Activated CD4-positive, alpha-beta memory T cell treated with anti-CD3 and anti-CD28 coated beads for 36 hours (primary cell): ENCODE measurements at regions of chr5 and their contacts with region 1.

Region 1: GRCh38 chr5:56080375-56081052 is 85.8 kb upstream of the IL6ST start:
- DNase-seq: peak; percentile 50
- H3K4me3 Mint-ChIP-seq: peak overlapping the region; percentile 2
- H3K27ac Mint-ChIP-seq: peak overlapping the region; percentile 71
- H3K4me1 Mint-ChIP-seq: peaks cover 47% of the 10 kb centered on the region
- H3K27me3 Mint-ChIP-seq: no peaks in the 10 kb centered on the region

Region 2: GRCh38 chr5:56012281-56012963 is 68.1 kb before region 1 on chr5:
- CTCF ChIA-PET with region 1: no interaction called
- POLR2A ChIA-PET with region 1: interaction called, 3 read pairs
- intact Hi-C with region 1: loop called (anchors 1 kb)
- DNase-seq: peak; percentile 61
- H3K4me3 Mint-ChIP-seq: peak overlapping the region; percentile 31
- H3K27ac Mint-ChIP-seq: peak overlapping the region; percentile 81
- H3K4me1 Mint-ChIP-seq: peaks cover 30% of the 10 kb centered on the region
- H3K27me3 Mint-ChIP-seq: no peaks in the 10 kb centered on the region